Upper lobe of right lung (tissue), 1 donor: ENCODE measurements at regions of chr22 and their contacts with region 1.

Region 1: GRCh38 chr22:36323182-36323854 is 64.4 kb downstream of the MYH9 start:
- DNase-seq: peak; percentile 79
- ATAC-seq: peak; percentile 56
- H3K4me3 ChIP-seq: no peak overlapping the region
- H3K27ac ChIP-seq: peak overlapping the region; percentile 91
- H3K4me1 ChIP-seq: peaks cover 56% of the 10 kb centered on the region
- H3K27me3 ChIP-seq: no peaks in the 10 kb centered on the region
- CTCF ChIP-seq: no peak

Region 2: DNA sequence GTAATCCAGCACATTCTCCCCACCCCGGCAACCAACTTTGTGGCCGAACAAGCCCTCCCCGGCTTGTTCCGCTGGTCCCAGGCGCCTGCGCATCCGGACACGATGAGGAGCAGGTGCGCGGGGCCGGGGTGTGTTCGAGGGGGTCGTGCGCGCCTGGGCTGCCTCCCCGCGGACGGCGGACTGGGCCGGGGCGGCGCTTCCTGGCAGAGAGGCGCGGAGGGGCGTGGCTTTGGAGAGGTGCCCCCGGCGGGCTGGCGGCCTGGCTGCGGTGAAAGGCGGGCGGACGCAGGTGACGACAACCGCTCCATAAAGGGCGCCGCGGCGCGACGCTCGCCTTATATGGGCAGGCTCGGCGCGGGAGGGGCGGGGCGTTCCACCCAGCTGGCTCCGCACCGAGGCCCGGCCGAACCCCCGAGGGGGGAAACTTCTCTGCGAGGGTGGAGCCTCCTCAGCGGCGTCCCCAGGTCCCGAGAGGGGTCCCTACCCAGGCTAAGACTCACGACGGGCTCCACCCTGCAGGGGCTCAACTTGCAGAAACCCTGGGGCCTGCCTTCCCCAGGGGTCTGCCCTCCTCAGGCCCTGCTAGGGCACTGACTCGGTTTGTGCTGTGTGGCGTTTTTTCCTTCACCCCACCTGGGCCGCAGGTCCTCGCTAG is 131.7 kb after region 1 on chr22:
- intact Hi-C with region 1: loop called (anchors 5 kb)
- DNase-seq: peak; percentile 97
- ATAC-seq: peak; percentile 88
- H3K4me3 ChIP-seq: peak overlapping the region; percentile 61
- H3K27ac ChIP-seq: peak overlapping the region; percentile 90
- H3K4me1 ChIP-seq: peaks cover 65% of the 10 kb centered on the region
- H3K27me3 ChIP-seq: no peaks in the 10 kb centered on the region
- CTCF ChIP-seq: no peak